ENCODE measurements at regions of chr10 and their contacts with region 1.

Region 1: GRCh38 chr10:569961-570627 is 119.4 kb downstream of the DIP2C start:
- DNase-seq: no peak
- ATAC-seq: no peak
- H3K4me3 ChIP-seq: no peak overlapping the region
- H3K27ac ChIP-seq: no peak overlapping the region
- H3K4me1 ChIP-seq: peaks cover 0 to 10% (median under 1%) of the 10 kb centered on the region in 9 donors
- H3K27me3 ChIP-seq: no peaks in the 10 kb centered on the region
- CTCF ChIP-seq: no peak

Region 2: GRCh38 chr10:178208-178607 is 391.9 kb before region 1 on chr10:
- intact Hi-C with region 1: no loop called
- DNase-seq: no peak
- ATAC-seq: peak in 1 of 8 donors; percentile 42
- H3K4me3 ChIP-seq: no peak overlapping the region
- H3K27ac ChIP-seq: no peak overlapping the region
- H3K4me1 ChIP-seq: peaks cover 0 to 27% (median 8%) of the 10 kb centered on the region in 9 donors
- H3K27me3 ChIP-seq: no peaks in the 10 kb centered on the region
- CTCF ChIP-seq: peak in 7 of 9 donors; percentile 30 to 65 (median 51)

Region 3: DNA sequence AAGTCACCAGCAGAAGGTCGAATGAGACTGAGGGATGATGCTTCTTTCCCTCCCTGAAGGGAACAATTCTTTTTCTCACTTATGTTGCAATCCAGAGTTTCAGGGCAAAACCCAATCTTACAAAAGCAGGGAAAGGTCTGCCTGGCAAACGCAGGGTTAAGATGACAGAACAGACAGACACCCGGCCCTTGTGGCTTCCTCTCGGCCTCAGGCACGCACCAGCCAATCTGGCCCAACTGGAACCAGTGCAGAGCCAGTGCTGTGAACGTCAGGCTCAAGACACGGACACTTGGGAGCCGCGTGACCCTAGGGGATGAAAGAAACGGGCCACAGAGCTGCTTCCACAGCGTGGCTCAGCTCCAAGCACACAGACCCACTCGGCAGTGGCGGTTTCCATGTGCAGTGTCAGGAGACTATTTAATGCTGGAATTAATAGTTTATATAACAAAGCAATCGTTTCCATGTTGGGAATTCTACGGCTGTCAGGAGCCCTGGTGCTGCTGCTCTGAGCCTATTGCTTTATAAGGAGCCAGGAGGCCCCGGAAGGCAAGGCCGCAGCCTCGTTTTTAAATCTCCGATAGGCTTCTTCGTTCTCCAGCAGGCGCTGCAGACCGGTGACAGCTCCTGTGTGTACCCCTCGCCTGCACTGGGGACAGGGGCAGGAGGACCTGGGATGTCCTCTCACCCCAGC is 79.1 kb before region 1 on chr10:
- intact Hi-C with region 1: no loop called
- DNase-seq: peak; percentile 50 to 67
- ATAC-seq: peak; percentile 46 to 78 (median 68)
- H3K4me3 ChIP-seq: peak overlapping the region in 3 of 10 donors; percentile 3 to 11 (median 5)
- H3K27ac ChIP-seq: peak overlapping the region in 9 of 10 donors; percentile 8 to 72 (median 58)
- H3K4me1 ChIP-seq: peaks cover 0 to 60% (median 34%) of the 10 kb centered on the region in 9 donors
- H3K27me3 ChIP-seq: no peaks in the 10 kb centered on the region
- CTCF ChIP-seq: no peak

Region 4: DNA sequence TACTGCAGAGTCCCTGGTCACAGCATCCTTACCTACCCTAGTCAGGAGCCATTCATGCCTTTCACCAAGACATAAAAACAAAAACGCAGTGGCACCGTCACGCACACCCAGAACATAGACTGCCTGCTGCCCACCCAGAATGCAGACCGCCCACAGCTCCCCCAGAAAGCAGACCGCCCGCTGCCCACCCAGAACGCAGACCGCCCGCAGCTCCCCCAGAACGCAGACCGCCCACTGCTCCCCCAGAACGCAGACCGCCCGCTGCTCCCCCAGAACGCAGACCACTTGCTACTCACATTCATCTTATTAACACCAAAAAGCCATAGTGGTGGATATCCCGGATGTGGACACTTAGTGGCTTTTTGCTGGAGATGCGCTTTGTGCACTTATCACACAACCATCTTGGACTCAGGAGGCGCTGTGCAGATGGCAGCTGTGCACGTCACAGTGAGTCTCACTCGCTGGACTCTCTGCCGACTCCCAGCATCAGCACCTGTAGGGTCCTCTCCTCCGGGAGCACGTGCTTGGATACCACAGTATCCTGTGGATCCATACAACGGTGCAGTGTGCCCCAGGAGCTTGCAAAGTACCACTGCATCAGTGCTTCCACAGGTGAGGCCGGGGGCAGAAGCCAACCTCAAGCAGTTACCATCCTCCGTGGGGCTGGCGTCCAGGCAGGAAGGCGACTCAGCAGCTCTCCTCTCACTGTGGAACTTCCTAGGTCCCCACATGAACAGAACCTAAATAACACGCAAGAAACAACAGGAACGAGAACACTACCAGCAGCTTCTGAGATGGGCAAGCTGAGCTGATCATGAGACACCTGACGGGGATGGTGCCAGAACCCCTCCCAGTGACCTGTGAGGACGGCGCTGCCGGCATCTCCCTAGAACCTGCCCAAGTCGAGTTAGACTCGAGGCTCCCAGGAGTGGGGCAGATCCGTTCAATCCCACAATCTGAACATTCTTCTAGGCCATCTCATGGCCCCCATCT is 41.6 kb before region 1 on chr10:
- intact Hi-C with region 1: loop called in 1 of 10 experiments (anchors 1 kb)
- DNase-seq: no peak
- ATAC-seq: no peak
- H3K4me3 ChIP-seq: no peak overlapping the region
- H3K27ac ChIP-seq: no peak overlapping the region
- H3K4me1 ChIP-seq: peaks cover 0 to 13% (median 4%) of the 10 kb centered on the region in 9 donors
- H3K27me3 ChIP-seq: no peaks in the 10 kb centered on the region
- CTCF ChIP-seq: no peak

Measured in heart right ventricle (tissue), 16 donors.